ENCODE measurements at regions of chr12 and their contacts with region 1.

Region 1: GRCh38 chr12:117098361-117099217 is 627 bp downstream of the TESC start:
- DNase-seq: peak; percentile 22
- H3K4me3 Mint-ChIP-seq: peak overlapping the region; percentile 77
- H3K27ac Mint-ChIP-seq: no peak overlapping the region
- H3K4me1 Mint-ChIP-seq: peaks cover 21% of the 10 kb centered on the region
- H3K27me3 Mint-ChIP-seq: peaks cover 21% of the 10 kb centered on the region

Region 2: GRCh38 chr12:116759783-116760621 is 338.6 kb before region 1 on chr12:
- intact Hi-C with region 1: no loop called
- DNase-seq: peak; percentile 23
- H3K4me3 Mint-ChIP-seq: peak overlapping the region; percentile 62
- H3K27ac Mint-ChIP-seq: peak overlapping the region; percentile 19
- H3K4me1 Mint-ChIP-seq: peaks cover 10% of the 10 kb centered on the region
- H3K27me3 Mint-ChIP-seq: no peaks in the 10 kb centered on the region

Region 3: GRCh38 chr12:116891952-116892744 is 206.4 kb before region 1 on chr12:
- intact Hi-C with region 1: no loop called
- DNase-seq: no peak
- H3K4me3 Mint-ChIP-seq: no peak overlapping the region
- H3K27ac Mint-ChIP-seq: no peak overlapping the region
- H3K4me1 Mint-ChIP-seq: no peaks in the 10 kb centered on the region
- H3K27me3 Mint-ChIP-seq: peaks cover 16% of the 10 kb centered on the region

Region 4: GRCh38 chr12:117063162-117063911 is 35.3 kb before region 1 on chr12:
- intact Hi-C with region 1: loop called (anchors 2 kb)
- DNase-seq: peak; percentile 34
- H3K4me3 Mint-ChIP-seq: peak overlapping the region; percentile 46
- H3K27ac Mint-ChIP-seq: peak overlapping the region; percentile 90
- H3K4me1 Mint-ChIP-seq: peaks cover 41% of the 10 kb centered on the region
- H3K27me3 Mint-ChIP-seq: no peaks in the 10 kb centered on the region

Region 5: GRCh38 chr12:117148642-117149041 is 50.1 kb after region 1 on chr12:
- intact Hi-C with region 1: loop called (anchors 1 kb)
- DNase-seq: no peak
- H3K4me3 Mint-ChIP-seq: peak overlapping the region; percentile 26
- H3K27ac Mint-ChIP-seq: peak overlapping the region; percentile 68
- H3K4me1 Mint-ChIP-seq: peaks cover 54% of the 10 kb centered on the region
- H3K27me3 Mint-ChIP-seq: no peaks in the 10 kb centered on the region